ENCODE measurements at regions of chr2 and their contacts with region 1.

Region 1: GRCh38 chr2:11377928-11378545 is 33.6 kb upstream of the ROCK2 start:
- DNase-seq: no peak
- ATAC-seq: no peak
- H3K4me3 ChIP-seq: no peak overlapping the region
- H3K27ac ChIP-seq: no peak overlapping the region
- H3K4me1 ChIP-seq: peaks cover 90% of the 10 kb centered on the region
- H3K27me3 ChIP-seq: no peaks in the 10 kb centered on the region
- CTCF ChIP-seq: no peak
- EP300 ChIP-seq: no peak
- POLR2A ChIP-seq: no peak
- RAD21 ChIP-seq: no peak

Region 2: GRCh38 chr2:11406267-11406957 is 28.4 kb after region 1 on chr2:
- CTCF ChIA-PET with region 1: no interaction called
- POLR2A ChIA-PET with region 1: interaction called, 27 read pairs
- in situ Hi-C with region 1: no loop called
- intact Hi-C with region 1: loop called (anchors 5 kb)
- DNase-seq: no peak
- ATAC-seq: no peak
- H3K4me3 ChIP-seq: no peak overlapping the region
- H3K27ac ChIP-seq: no peak overlapping the region
- H3K4me1 ChIP-seq: peaks cover 58% of the 10 kb centered on the region
- H3K27me3 ChIP-seq: no peaks in the 10 kb centered on the region
- CTCF ChIP-seq: no peak
- EP300 ChIP-seq: no peak
- POLR2A ChIP-seq: no peak
- RAD21 ChIP-seq: no peak

Region 3: DNA sequence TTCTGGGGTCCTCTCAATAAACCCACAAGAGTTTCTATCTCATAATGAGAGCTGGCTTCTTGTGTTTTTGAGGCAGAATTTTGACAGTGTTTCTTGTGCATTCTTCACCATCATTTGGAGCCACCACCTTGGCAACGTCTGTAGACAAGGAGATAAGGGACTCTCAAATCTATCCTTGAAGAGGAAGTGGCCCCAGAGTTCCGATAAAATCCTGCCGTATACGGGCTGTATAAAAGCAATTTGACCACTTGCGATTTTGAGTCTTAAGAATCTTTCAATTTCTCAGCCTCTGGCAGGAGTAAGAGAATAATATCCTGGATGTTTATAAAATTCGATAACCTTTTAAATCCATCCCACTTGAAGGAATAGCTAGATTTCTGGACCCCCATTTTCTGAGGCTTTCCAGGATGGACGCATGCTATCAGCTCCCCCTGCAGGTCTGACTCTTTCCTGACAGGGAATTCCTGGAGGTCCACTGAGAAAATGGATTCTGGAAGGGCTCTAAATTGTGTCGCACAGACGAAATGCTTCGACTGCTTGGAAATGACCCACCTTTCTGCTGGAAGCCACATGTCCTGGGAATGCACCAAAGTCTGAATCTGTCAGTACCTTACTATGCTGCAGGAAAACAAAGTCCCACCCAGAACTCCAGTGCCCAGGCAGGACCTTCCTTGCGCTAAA is 33.9 kb after region 1 on chr2:
- CTCF ChIA-PET with region 1: no interaction called
- POLR2A ChIA-PET with region 1: interaction called, 4 read pairs
- in situ Hi-C with region 1: no loop called
- intact Hi-C with region 1: loop called (anchors 5 kb)
- DNase-seq: peak; percentile 65
- ATAC-seq: peak; percentile 78
- H3K4me3 ChIP-seq: no peak overlapping the region; a peak in 1 of 6 replicates
- H3K27ac ChIP-seq: no peak overlapping the region
- H3K4me1 ChIP-seq: peaks cover 33% of the 10 kb centered on the region
- H3K27me3 ChIP-seq: no peaks in the 10 kb centered on the region
- CTCF ChIP-seq: peak; percentile 92
- EP300 ChIP-seq: no peak
- POLR2A ChIP-seq: no peak
- RAD21 ChIP-seq: peak; percentile 93